HAP-1 (cell line): ENCODE measurements at regions of chrX and their contacts with region 1.

Region 1: DNA sequence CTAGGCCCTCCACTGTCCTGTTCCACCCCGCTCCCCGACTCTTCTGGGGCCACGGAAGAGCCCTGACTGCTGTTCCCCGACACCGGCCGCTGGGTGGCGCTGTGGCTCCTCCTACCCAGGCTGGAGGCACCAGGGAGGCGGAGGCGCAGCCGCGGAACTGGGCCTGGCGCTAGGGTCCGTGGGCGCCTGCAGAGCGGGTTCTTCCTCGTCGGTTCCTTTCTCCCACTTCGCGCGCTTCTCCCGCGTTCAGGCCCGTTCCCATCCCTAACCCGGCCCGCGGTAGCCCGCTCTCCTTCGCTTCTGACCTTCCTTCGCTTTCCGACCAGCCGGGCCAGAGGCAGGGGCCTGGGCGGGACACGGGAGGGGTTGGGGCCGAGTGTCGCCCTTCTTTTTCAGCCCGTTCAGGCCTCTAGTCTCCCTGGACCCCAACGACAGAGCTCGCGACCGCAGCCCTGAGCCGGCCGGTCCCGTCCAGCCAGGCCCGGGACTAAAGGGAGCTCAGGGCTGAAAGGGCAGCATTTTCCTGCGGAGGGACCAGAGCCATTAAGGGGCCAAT is 34.3 kb downstream of the NALF2 start:
- DNase-seq: peak; percentile 55 to 90
- H3K4me3 ChIP-seq: peak overlapping the region; percentile 6; the same call in 1 of the 2 replicates
- H3K4me1 ChIP-seq: peaks cover 5% of the 10 kb centered on the region
- H3K27me3 ChIP-seq: no peaks in the 10 kb centered on the region

Region 2: DNA sequence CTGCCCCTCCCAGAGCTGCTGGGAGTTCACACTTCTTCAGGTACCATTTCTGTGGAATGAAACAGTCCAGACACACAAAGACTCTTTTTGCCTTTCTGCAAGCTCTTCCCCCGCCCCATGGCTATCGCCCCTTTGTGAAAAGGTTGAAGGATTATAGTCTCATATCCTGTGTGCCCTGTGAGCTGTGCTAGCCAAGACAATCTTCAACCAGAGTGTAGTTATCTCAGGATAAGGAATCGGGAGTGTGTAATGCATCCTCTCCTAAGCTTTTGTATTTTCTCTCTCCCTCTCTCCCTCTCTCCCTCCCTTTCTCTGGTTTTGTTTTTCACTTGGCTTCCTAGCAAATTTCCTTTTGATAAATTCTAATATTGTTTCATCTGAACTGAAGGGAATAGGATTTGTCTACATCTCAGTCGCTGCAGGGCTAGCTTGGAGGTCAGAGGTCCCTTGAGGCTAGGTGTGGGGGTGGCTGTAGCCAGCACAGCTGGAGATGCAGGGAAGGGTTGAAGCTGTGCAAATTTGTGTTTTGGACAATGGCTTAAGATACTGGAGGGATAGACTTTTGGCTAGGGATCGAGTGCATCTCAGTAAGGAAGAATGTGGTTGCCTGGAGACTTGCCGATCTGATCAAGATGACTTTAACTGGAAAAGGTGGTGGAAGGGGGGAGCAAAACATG is 108.9 kb before region 1 on chrX:
- in situ Hi-C with region 1: loop called (anchors 25 kb)
- DNase-seq: no peak
- H3K4me3 ChIP-seq: no peak overlapping the region
- H3K4me1 ChIP-seq: no peaks in the 10 kb centered on the region
- H3K27me3 ChIP-seq: peaks cover 20% of the 10 kb centered on the region

Region 3: GRCh38 chrX:69627744-69628143 is 89.3 kb after region 1 on chrX:
- in situ Hi-C with region 1: loop called (anchors 10 kb)
- DNase-seq: no peak
- H3K4me3 ChIP-seq: no peak overlapping the region
- H3K4me1 ChIP-seq: no peaks in the 10 kb centered on the region
- H3K27me3 ChIP-seq: no peaks in the 10 kb centered on the region